PC-3 (cell line): ENCODE measurements at regions of chr1 and their contacts with region 1.

Region 1: DNA sequence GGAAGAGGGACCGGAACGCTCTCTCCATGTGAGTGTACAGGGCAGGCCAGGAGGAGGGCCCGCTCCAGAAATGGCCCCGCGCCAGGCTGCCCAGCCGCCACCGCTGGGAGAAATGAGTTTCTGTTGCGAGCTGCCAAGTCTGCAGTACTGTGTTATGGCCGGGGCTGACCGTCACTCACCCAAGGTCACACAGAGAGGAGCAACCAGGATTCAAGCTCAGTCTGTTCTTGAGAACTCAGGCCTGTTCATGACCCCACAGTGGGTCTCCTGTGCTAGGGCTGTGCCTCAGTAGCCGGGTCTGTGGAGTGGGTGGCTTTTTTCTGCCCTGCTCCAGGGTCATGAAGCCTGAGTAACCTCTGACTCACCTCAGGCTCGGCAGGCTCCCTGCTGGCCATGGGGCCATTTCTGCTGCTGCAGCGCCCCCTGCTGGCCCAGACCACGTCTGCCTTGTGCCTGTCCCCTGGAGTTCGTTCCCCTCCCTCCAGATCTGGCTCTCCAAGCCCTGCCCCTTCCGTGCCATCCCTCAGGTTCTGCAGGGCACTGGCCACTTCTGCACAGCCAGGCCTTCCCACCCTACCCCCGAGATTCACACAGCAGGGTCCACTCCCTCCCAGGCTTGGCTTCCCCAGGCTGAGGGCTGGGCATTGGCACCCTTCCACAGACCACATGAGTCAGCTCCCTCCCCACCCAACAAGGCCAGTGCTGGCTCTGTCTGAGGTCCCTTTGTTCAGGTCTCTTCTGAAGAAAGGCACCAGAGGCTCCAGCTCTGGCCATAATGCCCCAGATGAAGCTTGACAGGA is 51.8 kb downstream of the EDN2 start:
- DNase-seq: peak; percentile 90
- ATAC-seq: peak; percentile 93
- H3K4me3 ChIP-seq: peak overlapping the region; percentile 31; the same call in 1 of the 2 replicates
- H3K27ac ChIP-seq: peak overlapping the region; percentile 68
- H3K4me1 ChIP-seq: peaks cover 20% of the 10 kb centered on the region
- H3K27me3 ChIP-seq: no peaks in the 10 kb centered on the region
- CTCF ChIP-seq: peak; percentile 98

Region 2: GRCh38 chr1:41268154-41268770 is 164.4 kb before region 1 on chr1:
- CTCF ChIA-PET with region 1: no interaction called
- POLR2A ChIA-PET with region 1: no interaction called
- intact Hi-C with region 1: loop called (anchors 1 kb)
- DNase-seq: peak; percentile 79
- ATAC-seq: peak; percentile 93
- H3K4me3 ChIP-seq: no peak overlapping the region
- H3K27ac ChIP-seq: no peak overlapping the region
- H3K4me1 ChIP-seq: no peaks in the 10 kb centered on the region
- H3K27me3 ChIP-seq: no peaks in the 10 kb centered on the region
- CTCF ChIP-seq: peak; percentile 91

Region 3: GRCh38 chr1:41322835-41323627 is 109.7 kb before region 1 on chr1:
- CTCF ChIA-PET with region 1: no interaction called
- POLR2A ChIA-PET with region 1: no interaction called
- intact Hi-C with region 1: loop called (anchors 1 kb)
- DNase-seq: peak; percentile 66
- ATAC-seq: peak; percentile 99
- H3K4me3 ChIP-seq: no peak overlapping the region
- H3K27ac ChIP-seq: no peak overlapping the region
- H3K4me1 ChIP-seq: no peaks in the 10 kb centered on the region
- H3K27me3 ChIP-seq: no peaks in the 10 kb centered on the region
- CTCF ChIP-seq: peak; percentile 73

Region 4: DNA sequence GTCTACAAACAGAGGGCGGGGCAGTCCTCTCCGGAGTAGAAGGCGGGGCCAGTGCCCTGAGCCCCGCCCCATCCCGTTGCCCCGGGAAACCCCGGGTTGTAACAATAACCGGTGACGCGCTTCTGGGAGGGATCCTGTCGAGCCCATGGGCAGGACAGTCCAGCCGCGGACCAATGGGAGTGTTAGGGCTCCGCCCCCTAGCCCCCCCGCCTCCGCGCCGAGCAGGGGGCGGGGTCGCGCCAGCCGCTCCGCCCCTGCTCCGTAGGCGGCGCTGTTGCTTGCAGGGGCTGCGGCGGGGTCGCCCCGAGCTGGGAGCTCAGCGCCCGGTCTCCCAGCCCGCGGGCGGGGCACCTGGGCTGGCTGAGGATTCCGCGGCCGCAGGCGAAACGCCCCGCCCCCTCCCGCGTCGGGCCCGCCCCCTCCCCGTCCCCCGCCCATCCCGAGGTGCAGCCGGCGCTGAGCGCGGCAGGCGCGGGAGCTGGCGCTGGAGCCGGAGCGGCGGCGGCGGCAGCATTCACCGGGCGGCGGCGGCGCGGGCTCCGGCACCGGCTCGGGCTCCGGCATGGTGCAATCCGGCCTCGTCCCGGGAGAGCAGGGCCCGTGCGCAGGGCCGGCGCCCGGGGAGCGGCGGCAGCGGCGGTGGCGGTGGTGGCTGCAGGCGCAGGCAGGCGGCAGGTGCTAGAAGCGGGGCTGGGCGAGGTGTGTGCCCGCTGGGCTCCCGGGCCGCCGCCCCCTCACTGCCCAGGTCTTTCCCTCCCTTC is 71.5 kb before region 1 on chr1 and contains the start of gene FOXO6:
- CTCF ChIA-PET with region 1: no interaction called
- POLR2A ChIA-PET with region 1: no interaction called
- intact Hi-C with region 1: loop called (anchors 5 kb)
- DNase-seq: peak; percentile 99
- ATAC-seq: peak; percentile 93
- H3K4me3 ChIP-seq: peak within 1 kb of the TSS; percentile 66
- H3K27ac ChIP-seq: no peak within 1 kb of the TSS
- H3K4me1 ChIP-seq: peaks cover 27% of the 10 kb centered on the region
- H3K27me3 ChIP-seq: peaks cover 10% of the 10 kb centered on the region
- CTCF ChIP-seq: 0 out of 2 replicates have a peak, but pooled peaks have one; percentile 19
- total RNA-seq, gene FOXO6: 1.2 and 5.4 TPM in 2 replicates

Region 5: GRCh38 chr1:41484372-41485241 is 51.9 kb after region 1 on chr1 and contains the start of gene EDN2:
- CTCF ChIA-PET with region 1: interaction called, 3 read pairs
- POLR2A ChIA-PET with region 1: no interaction called
- intact Hi-C with region 1: loop called (anchors 10 kb)
- DNase-seq: peak; percentile 63
- ATAC-seq: peak; percentile 76
- H3K4me3 ChIP-seq: peak within 1 kb of the TSS; percentile 29; the same call in 1 of the 2 replicates
- H3K27ac ChIP-seq: no peak within 1 kb of the TSS
- H3K4me1 ChIP-seq: peaks cover 37% of the 10 kb centered on the region
- H3K27me3 ChIP-seq: no peaks in the 10 kb centered on the region
- CTCF ChIP-seq: peak; percentile 52
- total RNA-seq, gene EDN2: 0.36 TPM in 1 of 2 replicates, not detected in the other